HAP-1 (cell line): ENCODE measurements at regions of chr12 and their contacts with region 1.

Region 1: DNA sequence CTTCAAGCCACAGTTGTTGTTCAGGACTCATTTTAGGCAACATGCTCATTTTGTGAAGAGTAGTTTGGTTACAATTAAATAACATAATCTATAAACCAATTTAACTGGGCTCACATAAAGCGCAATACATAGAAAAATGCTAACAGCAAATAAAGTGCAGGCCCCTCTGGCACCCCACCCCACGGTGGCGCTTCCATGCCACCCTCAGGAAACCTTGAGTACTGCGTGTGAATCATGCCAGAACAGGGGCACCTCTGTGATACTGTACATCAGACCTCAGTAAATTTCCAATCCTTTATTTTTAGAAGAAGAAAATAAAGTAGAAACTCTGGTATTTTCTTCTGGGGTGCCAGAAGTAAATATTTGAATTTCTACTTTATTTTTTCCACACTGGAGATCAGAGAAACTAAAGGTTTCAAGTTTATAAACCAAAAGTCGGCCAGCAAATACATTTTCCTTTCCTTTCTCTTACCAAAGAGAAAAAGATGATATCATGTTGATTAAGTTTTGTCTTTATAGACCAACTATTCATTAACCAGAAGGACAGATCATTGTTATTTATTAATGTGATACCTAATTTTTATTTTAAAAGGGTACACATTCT is 316.8 kb downstream of the PAWR start:
- DNase-seq: peak; percentile 28 to 77
- H3K4me3 ChIP-seq: no peak overlapping the region
- H3K4me1 ChIP-seq: peaks cover 10% of the 10 kb centered on the region
- H3K27me3 ChIP-seq: no peaks in the 10 kb centered on the region

Region 2: DNA sequence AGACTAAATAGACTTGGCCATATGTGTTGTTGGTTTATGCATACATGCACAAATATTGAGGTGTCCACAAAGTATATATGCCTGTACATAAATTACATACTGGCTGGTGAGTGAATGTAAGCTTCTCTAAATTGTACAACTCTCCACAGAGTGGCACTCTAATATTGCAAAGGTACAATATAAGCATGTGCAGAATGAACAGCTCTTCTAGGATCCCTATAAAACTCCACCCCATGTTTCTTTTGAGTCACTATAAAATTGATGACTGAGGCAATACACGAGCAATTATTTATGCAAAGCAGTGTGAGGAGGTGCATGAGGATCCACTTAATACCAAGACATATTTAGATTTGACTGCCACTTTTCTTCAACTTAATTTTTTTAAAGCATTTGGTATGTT is 1371.1 kb before region 1 on chr12:
- in situ Hi-C with region 1: loop called (anchors 25 kb)
- DNase-seq: no peak
- H3K4me3 ChIP-seq: no peak overlapping the region
- H3K4me1 ChIP-seq: no peaks in the 10 kb centered on the region
- H3K27me3 ChIP-seq: no peaks in the 10 kb centered on the region

Region 3: GRCh38 chr12:78181544-78182162 is 1192.3 kb before region 1 on chr12:
- in situ Hi-C with region 1: loop called (anchors 25 kb)
- DNase-seq: peak in 1 of 2 experiments; percentile 29
- H3K4me3 ChIP-seq: no peak overlapping the region
- H3K4me1 ChIP-seq: peaks cover 4% of the 10 kb centered on the region; the same call in 1 of the 2 replicates
- H3K27me3 ChIP-seq: no peaks in the 10 kb centered on the region

Region 4: DNA sequence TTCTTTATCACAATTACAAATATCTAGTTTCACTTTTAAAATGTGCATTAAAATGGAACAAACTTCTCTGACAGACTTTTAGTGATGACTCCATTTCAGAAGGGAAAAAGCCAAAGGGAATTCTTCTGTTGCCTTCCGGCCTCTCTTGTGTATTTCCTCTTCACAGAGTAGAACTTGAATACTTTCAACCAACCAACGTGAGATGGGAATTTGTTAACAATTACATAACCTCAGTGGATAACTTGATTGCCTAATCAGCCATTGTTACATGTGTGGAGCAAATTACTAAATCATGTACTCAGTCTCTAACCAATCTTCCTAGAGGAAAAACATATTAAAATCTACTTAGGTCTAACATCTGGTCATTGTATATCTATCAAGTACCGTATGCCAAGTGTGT is 218.3 kb before region 1 on chr12:
- in situ Hi-C with region 1: no loop called
- DNase-seq: no peak
- H3K4me3 ChIP-seq: no peak overlapping the region
- H3K4me1 ChIP-seq: no peaks in the 10 kb centered on the region
- H3K27me3 ChIP-seq: no peaks in the 10 kb centered on the region

Region 5: DNA sequence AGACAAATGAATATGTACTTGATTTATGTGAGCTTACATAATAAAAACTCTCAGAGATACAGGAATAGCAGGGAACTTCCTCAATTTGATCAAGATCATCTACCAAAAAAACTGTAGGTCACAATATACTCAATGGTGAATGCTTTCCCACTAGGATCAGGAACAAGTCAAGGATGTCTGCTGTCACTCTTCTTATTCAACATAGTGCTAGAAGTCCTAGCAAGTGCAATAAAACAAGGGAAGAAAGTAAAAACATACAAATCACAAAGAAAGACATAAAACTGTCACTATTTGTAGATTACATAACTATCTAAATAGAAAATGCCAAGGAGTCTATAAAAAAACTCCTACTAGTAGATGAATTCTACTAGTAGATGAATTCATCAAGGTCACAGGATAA is 358.6 kb after region 1 on chr12:
- in situ Hi-C with region 1: no loop called
- DNase-seq: no peak
- H3K4me3 ChIP-seq: no peak overlapping the region
- H3K4me1 ChIP-seq: no peaks in the 10 kb centered on the region
- H3K27me3 ChIP-seq: no peaks in the 10 kb centered on the region